Heart left ventricle (tissue), 16 donors: ENCODE measurements at regions of chr3 and their contacts with region 1.

Region 1: GRCh38 chr3:188052169-188053030 is 101.6 kb upstream of the LPP start:
- DNase-seq: peak; percentile 84 to 92 (median 89)
- ATAC-seq: peak; percentile 97 to 98 (median 98)
- H3K4me3 ChIP-seq: peak overlapping the region in 6 of 12 donors; percentile 12 to 37 (median 24)
- H3K27ac ChIP-seq: peak overlapping the region; percentile 49 to 92 (median 79)
- H3K4me1 ChIP-seq: peaks cover 0 to 29% (median 15%) of the 10 kb centered on the region in 12 donors
- H3K27me3 ChIP-seq: peaks cover 0 to 3% (median 0%) of the 10 kb centered on the region in 9 donors
- CTCF ChIP-seq: peak in 11 of 12 donors; percentile 19 to 82 (median 59)
- POLR2A ChIP-seq: peak in 1 of 2 donors; percentile 24

Region 2: DNA sequence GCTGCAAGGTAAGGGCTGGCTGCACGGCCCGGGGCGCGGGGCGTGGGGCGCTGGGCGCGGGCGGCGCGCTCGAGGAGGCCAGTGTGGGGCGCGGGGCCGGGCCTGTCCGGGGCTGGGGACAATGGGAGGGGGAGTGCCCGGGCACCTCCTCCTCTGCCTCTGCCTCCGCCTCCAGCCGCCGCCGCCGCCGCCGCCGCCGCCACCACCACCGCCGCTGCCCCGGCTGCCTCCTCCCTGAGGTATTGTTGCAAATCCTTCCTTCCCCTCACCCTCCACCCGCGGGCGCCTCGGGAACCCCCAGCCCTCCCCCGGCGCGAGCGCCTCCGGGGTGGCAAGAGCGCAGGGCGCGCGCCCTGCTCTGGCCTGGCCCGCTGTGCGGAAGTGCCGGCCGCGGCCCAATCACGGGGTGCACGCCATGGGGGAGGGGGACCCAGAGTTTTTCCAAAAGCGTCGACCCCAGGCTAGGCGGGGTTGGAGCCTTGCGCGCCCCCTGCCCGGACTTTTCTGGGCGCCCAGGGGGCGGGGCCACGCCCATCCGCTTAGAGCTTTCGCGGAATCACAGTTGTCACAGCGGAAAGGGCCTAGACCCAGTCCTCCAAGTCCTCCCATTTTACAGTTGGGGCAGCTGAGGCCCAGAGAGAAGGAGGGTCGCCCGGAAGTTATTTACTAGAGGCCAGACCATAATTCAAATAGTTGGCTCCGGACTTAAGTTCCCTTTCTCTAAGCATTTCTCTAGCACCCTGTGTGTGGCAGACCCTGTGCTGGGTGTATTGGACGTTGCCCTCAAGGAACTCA is 101.8 kb after region 1 on chr3 and contains the start of gene LPP:
- intact Hi-C with region 1: loop called in 3 of 10 experiments (anchors 5 kb)
- DNase-seq: peak; percentile 83 to 92 (median 86)
- ATAC-seq: peak; percentile 67 to 93 (median 82)
- H3K4me3 ChIP-seq: peak within 1 kb of the TSS; percentile 68 to 94 (median 86)
- H3K27ac ChIP-seq: peak within 1 kb of the TSS; percentile 90 to 99 (median 97)
- H3K4me1 ChIP-seq: peaks cover 0 to 62% (median 41%) of the 10 kb centered on the region in 12 donors
- H3K27me3 ChIP-seq: no peaks in the 10 kb centered on the region
- CTCF ChIP-seq: peak in 2 of 12 donors; percentile 7 to 25
- POLR2A ChIP-seq: no peak
- total RNA-seq, gene LPP: 76.6 to 178 (median 111) TPM

Region 3: DNA sequence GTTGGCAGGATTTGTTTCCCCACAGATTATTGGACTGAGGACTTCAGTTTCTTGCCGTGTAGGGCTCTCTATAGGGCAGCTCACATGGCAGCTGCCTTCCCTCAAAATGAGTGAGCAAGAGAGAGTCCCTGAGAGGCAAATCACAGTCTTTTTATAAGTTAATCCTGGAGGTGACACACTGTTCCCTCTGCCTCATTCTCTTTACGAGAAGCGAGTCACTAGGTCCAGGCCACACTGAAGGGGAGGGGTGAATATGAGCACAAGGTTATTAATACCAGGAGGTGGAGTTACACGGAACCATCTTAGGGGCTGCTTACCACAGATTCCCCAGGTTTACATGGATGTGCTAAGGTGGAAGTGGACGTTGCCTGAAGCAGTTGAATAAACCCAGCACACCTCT is 178.6 kb after region 1 on chr3:
- intact Hi-C with region 1: loop called in 1 of 10 experiments (anchors 10 kb)
- DNase-seq: peak in 2 of 5 donors; percentile 50 to 70
- ATAC-seq: peak; percentile 88 to 94 (median 93)
- H3K4me3 ChIP-seq: no peak overlapping the region
- H3K27ac ChIP-seq: peak overlapping the region; percentile 42 to 89 (median 76)
- H3K4me1 ChIP-seq: peaks cover 0 to 58% (median 21%) of the 10 kb centered on the region in 12 donors
- H3K27me3 ChIP-seq: no peaks in the 10 kb centered on the region
- CTCF ChIP-seq: no peak
- POLR2A ChIP-seq: peak in 1 of 2 donors; percentile 42

Region 4: GRCh38 chr3:188262913-188263683 is 210.7 kb after region 1 on chr3:
- intact Hi-C with region 1: loop called in 1 of 10 experiments (anchors 10 kb)
- DNase-seq: peak in 4 of 5 donors; percentile 47 to 60 (median 50)
- ATAC-seq: peak; percentile 79 to 88 (median 86)
- H3K4me3 ChIP-seq: no peak overlapping the region
- H3K27ac ChIP-seq: peak overlapping the region; percentile 74 to 96 (median 89)
- H3K4me1 ChIP-seq: peaks cover 2 to 94% (median 64%) of the 10 kb centered on the region in 12 donors
- H3K27me3 ChIP-seq: no peaks in the 10 kb centered on the region
- CTCF ChIP-seq: peak in 1 of 12 donors; percentile 7
- POLR2A ChIP-seq: no peak

Region 5: DNA sequence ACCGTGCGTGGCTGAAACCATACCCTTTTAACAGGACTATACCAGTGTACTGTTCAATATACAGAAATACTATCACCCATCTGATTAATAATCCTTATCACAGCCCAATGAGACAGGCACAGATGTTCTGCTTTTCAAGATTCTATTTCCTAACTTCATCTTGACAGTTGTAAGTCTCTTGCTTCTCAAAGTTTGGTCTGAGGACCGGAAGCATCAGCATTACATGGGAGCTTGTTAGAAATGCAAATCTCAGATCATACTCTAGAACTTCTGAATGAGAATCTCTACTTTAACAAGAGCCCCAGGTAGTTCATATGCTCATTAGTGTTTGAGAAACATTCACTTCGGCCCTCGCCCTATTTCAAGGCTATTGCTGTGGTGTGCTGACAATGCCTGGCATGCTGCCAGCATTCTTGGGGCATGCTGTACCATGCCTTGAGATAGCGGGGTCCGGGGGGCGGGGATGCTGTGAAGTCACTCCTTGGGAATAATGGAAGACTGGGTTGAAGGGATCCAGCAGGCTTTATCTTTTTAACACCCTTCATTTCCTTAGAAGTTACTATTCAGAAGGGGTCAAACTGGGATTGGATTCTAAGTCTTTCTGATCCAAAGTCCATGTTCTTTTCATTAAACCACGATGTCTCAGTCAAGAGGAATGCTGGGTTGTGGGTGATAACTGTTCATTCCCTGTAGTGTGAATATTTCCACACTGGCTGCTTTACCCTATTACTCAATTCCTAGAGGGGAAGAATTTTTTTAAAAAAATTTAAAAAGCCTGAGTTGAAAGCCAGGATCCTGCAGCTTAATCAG is 296.2 kb after region 1 on chr3:
- intact Hi-C with region 1: loop called in 2 of 10 experiments (anchors 10 kb)
- DNase-seq: peak; percentile 66 to 91 (median 84)
- ATAC-seq: peak; percentile 67 to 77 (median 74)
- H3K4me3 ChIP-seq: no peak overlapping the region
- H3K27ac ChIP-seq: peak overlapping the region; percentile 41 to 77 (median 64)
- H3K4me1 ChIP-seq: peaks cover 6 to 65% (median 41%) of the 10 kb centered on the region in 12 donors
- H3K27me3 ChIP-seq: no peaks in the 10 kb centered on the region
- CTCF ChIP-seq: no peak
- POLR2A ChIP-seq: no peak

Region 6: DNA sequence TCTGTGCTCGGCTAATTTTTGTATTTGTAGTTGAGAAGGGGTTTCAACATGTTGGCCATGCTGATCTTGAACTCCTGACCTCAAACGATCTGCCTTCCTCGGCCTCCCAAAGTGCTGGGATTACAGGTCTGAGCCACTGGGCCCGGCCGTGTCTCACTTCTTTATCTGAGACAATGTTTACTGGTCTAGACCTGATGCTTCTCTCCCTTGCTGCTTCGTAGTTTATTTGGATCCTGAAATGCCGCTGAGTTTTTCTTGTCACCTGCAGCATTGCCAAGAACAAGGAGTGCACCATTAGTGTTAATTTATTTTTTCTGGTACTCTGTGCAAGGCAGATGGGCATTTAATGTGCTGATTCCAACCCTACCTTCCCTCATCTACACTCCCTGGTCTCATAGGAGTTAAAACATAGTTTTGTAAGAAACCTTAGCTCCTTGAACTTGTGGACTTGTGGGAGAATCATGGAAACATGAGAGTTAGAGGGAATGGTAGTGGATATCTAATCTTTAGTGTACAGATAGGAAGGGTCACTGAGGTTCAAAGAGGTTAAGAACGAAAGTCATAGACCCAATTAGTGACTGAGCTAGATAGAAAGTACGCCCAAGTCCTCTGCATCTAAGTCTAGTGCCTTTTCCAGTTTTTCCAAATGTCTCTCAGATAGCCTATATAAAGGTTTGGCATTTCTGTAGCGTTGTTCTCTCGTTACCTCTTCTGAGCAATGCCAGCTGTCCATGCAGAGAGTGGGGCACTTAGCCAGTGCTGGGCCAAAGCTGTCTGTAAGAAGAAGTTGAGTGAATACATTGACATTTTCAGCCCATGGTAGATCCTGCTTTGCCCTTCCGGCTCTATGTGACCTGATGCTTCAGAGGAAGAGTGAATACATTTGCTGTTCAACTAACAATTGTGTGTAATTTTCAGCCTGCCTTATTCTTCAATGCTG is 345.6 kb after region 1 on chr3:
- intact Hi-C with region 1: loop called in 1 of 10 experiments (anchors 5 kb)
- DNase-seq: peak in 4 of 5 donors; percentile 16 to 60 (median 57)
- ATAC-seq: peak; percentile 40 to 83 (median 62)
- H3K4me3 ChIP-seq: peak overlapping the region in 9 of 12 donors; percentile 2 to 33 (median 23)
- H3K27ac ChIP-seq: peak overlapping the region; percentile 43 to 81 (median 72)
- H3K4me1 ChIP-seq: peaks cover 0 to 56% (median 29%) of the 10 kb centered on the region in 12 donors
- H3K27me3 ChIP-seq: no peaks in the 10 kb centered on the region
- CTCF ChIP-seq: no peak
- POLR2A ChIP-seq: no peak

Region 7: DNA sequence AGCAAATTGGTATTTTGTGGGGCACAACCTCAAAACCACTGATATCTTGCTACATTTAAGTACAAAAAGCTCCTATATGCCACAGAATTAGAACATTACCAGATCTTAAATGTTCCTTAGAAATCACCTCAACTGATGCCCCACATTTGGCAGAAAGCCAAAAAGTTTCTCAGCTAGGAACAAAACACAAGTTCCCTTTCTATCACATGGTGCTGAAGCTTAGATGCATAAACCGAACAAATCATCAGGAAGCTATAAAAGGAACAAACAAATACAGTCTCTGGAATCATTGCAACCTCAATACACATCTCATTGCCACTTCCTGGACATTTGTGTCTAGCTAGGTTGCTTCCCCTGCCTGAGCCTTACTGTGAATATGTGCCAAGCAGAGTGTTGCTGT is 594.2 kb after region 1 on chr3:
- intact Hi-C with region 1: loop called in 1 of 10 experiments (anchors 10 kb)
- DNase-seq: no peak
- ATAC-seq: peak in 3 of 4 donors; percentile 45 to 46 (median 46)
- H3K4me3 ChIP-seq: no peak overlapping the region
- H3K27ac ChIP-seq: peak overlapping the region in 1 of 12 donors; percentile 27
- H3K4me1 ChIP-seq: peaks cover 0 to 44% (median 18%) of the 10 kb centered on the region in 12 donors
- H3K27me3 ChIP-seq: no peaks in the 10 kb centered on the region
- CTCF ChIP-seq: no peak
- POLR2A ChIP-seq: no peak